ENCODE measurements at regions of chr2 and their contacts with region 1.

Region 1: DNA sequence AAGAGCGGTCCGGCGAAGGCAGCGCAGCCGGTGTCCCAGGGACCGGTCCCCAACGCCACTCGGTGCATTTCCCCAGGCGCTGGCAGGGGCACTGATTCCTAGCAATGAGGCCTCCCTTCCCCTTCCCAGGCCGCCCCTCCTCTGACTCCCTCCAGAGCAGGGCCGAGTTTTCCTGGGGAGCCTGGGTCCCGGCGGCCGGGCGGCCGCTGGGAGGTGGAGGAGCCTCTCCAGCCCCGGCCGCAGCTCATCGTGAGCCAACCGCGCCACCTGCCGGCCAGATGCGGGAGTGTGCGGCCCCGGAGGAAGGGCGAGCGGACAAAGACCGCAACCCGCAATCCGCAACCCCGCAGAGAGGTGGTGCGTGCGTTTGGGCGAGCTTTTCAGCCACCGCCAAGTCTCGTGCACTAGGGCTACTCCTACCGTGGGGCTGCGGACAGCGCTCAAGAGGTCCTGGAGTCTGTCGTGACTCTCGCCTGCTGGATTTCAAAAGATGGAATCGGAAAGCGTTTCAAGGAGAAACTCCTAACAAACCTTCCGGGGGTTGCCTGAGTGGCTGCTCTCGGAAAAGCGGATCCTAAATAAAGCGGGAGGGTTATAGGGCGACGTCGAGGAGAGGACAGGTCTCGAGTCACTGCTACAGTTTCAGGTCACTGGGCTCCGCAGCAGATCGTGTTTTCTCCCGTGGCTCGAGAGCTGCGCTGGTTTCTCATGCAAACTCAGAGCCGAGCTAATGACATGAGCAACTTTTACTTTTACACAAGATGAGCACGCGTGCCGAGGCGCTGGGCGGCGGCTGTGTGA is 1.5 kb upstream of the EPHA4 start:
- DNase-seq: peak; percentile 86
- H3K4me3 Mint-ChIP-seq: peak overlapping the region; percentile 81
- H3K27ac Mint-ChIP-seq: no peak overlapping the region
- H3K4me1 Mint-ChIP-seq: peaks cover 29% of the 10 kb centered on the region
- H3K27me3 Mint-ChIP-seq: peaks cover 35% of the 10 kb centered on the region

Region 2: DNA sequence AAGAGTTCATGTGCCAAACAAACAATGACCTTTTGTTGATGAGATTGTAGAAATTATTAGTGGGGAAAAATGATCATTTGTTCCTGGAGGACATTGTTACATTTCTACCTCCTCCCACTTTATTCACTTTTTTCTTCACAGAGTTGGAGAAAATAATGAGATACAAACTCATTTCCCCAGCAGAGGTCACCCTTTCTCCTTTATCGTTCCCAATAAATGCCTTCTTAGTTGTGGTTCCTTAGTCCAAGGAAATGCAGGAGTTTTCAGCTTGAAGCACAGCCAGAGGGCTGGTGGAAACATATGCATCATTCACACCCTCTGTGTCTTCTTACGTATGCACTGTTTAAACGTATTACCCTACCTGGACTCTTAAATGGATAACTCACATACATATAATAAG is 1837.4 kb before region 1 on chr2:
- CTCF ChIA-PET with region 1: no interaction called
- POLR2A ChIA-PET with region 1: no interaction called
- intact Hi-C with region 1: loop called (anchors 5 kb)
- DNase-seq: no peak
- H3K4me3 Mint-ChIP-seq: no peak overlapping the region
- H3K27ac Mint-ChIP-seq: no peak overlapping the region
- H3K4me1 Mint-ChIP-seq: no peaks in the 10 kb centered on the region
- H3K27me3 Mint-ChIP-seq: peaks cover 9% of the 10 kb centered on the region

Region 3: GRCh38 chr2:221104361-221104811 is 469.2 kb before region 1 on chr2:
- CTCF ChIA-PET with region 1: interaction called, 5 read pairs
- POLR2A ChIA-PET with region 1: no interaction called
- intact Hi-C with region 1: loop called (anchors 10 kb)
- DNase-seq: no peak
- H3K4me3 Mint-ChIP-seq: no peak overlapping the region
- H3K27ac Mint-ChIP-seq: no peak overlapping the region
- H3K4me1 Mint-ChIP-seq: peaks cover 5% of the 10 kb centered on the region
- H3K27me3 Mint-ChIP-seq: peaks cover 4% of the 10 kb centered on the region

Region 4: DNA sequence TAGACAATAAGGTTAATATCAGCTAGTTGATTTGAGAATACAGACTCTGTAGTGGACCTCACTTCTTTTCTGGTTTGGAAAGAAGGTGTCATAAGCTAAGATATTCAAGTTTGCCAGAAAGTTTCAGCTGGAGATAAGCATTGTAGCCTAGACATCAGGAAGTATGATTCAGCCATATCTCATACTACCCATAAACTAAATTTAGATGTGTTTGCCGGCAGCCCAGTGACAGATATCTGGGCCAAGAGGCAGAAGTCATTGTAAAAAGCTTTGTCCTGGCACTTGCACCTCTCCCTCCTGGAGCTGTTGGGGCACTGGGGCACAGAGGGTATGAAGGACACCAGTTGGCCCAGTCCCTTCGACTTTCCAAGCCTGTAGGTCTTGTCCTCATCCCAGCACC is 129.5 kb before region 1 on chr2:
- CTCF ChIA-PET with region 1: interaction called, 3 read pairs
- POLR2A ChIA-PET with region 1: no interaction called
- intact Hi-C with region 1: loop called (anchors 5 kb)
- DNase-seq: peak; percentile 19
- H3K4me3 Mint-ChIP-seq: no peak overlapping the region
- H3K27ac Mint-ChIP-seq: peak overlapping the region; percentile 10
- H3K4me1 Mint-ChIP-seq: peaks cover 8% of the 10 kb centered on the region
- H3K27me3 Mint-ChIP-seq: no peaks in the 10 kb centered on the region

Region 5: DNA sequence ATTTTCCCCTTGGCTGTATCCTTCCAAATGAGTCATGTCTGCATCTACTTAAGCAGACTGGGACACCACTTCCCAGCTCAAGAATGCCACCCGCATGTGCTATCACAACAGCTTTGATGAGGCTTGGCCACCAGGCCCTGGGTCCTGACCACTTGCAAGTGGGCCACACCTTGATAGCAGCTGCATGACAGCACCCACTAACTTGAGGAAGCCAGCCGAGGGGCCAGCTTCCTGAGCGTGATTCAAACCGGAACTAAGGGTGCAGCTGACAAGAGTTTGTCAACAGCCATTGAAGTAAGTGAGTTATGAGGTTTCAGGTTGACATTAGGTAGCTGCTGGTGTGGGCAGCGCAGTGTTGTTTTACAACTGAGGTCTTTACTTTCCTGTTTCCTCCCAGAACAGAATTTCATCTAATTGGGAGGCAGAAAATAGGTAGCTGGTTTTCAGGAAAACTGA is 55.9 kb before region 1 on chr2:
- CTCF ChIA-PET with region 1: interaction called, 6 read pairs
- POLR2A ChIA-PET with region 1: interaction called, 6 read pairs
- intact Hi-C with region 1: loop called (anchors 1 kb)
- DNase-seq: peak; percentile 89
- H3K4me3 Mint-ChIP-seq: no peak overlapping the region
- H3K27ac Mint-ChIP-seq: no peak overlapping the region
- H3K4me1 Mint-ChIP-seq: peaks cover 27% of the 10 kb centered on the region
- H3K27me3 Mint-ChIP-seq: no peaks in the 10 kb centered on the region

Region 6: DNA sequence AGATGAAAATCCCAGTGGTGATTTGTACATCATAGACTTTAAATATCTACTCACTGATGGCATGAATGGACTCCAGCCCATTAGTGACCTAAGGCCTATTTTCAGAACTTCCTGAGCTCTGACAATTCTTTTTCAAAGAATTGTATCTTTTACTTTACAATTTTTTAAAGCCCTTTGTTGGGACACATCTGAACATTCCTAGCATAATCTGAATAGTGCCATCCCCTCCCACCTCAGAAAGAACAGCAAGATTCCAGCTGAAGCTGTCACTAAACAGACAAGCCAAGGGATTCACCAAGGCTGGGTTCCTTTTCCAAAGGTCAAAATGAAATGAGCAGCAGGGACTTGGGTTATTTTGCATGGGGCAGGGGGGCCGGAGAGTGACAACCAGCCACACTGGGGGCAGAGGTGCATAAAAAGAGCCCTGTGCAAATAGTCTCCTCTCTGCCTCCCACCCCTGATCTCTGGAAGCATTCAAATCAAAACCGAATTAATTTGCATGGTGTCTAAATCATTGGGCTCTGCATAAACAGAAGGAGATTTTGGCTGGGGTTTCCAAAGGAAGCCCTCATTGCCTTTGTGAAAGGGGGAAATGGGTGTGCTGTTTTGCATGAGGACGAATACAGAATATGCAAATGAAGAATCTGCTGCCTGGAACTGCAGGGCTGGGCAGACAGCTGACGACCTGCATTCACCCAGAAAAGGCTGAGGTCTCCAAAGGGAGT is 18.7 kb before region 1 on chr2:
- CTCF ChIA-PET with region 1: interaction called, 13 read pairs
- POLR2A ChIA-PET with region 1: no interaction called
- intact Hi-C with region 1: loop called (anchors 1 kb)
- DNase-seq: peak; percentile 58
- H3K4me3 Mint-ChIP-seq: peak overlapping the region; percentile 50
- H3K27ac Mint-ChIP-seq: peak overlapping the region; percentile 77
- H3K4me1 Mint-ChIP-seq: peaks cover 62% of the 10 kb centered on the region
- H3K27me3 Mint-ChIP-seq: no peaks in the 10 kb centered on the region

Region 7: DNA sequence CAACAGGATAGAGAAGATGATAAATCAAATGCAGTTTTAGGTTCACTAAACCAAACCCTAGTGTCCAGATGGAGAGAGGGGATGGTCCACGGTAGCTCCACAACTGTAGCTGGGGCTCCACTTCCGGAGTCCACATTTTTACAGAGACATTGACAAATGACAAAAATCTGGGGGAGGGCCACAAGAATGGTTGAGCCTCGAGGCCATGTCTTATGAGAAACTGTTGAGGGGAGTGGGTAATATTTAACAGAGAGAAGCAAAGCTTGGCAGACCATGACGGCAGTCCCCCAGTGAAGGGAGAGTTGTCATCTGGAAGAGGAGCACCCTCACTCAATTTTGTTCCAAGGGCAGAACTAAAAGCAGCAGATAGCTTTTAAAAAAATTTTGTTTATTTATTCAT is 16.1 kb after region 1 on chr2:
- CTCF ChIA-PET with region 1: no interaction called
- POLR2A ChIA-PET with region 1: no interaction called
- intact Hi-C with region 1: no loop called
- DNase-seq: no peak
- H3K4me3 Mint-ChIP-seq: no peak overlapping the region
- H3K27ac Mint-ChIP-seq: no peak overlapping the region
- H3K4me1 Mint-ChIP-seq: no peaks in the 10 kb centered on the region
- H3K27me3 Mint-ChIP-seq: peaks cover 28% of the 10 kb centered on the region

Measured in activated CD4-positive, alpha-beta memory T cell treated with anti-CD3 and anti-CD28 coated beads for 36 hours (primary cell).